ENCODE measurements at regions of chr12 and their contacts with region 1.

Region 1: DNA sequence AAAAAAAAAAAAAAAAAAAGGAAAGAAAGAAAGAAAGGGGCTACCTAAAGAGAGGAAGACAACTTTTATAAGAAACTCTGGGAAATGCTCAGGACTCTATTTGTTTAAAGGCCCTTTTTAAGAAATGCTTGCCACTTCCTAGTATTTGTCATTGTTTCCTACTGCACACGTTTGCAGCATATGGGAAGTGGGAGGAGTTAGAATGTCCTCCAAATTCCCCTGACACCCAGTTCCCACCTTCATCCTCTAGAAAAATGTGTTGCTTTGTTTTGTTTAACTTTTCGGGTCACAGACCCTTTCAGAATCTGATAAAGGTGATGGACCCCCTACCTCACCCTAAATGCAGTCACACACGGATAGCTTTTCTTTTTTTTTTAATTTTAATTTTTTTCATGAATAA is 40.8 kb downstream of the NINJ2 start:
- DNase-seq: peak; percentile 28
- H3K4me3 Mint-ChIP-seq: peak overlapping the region; percentile 68
- H3K27ac Mint-ChIP-seq: peak overlapping the region; percentile 96
- H3K4me1 Mint-ChIP-seq: peaks cover 62% of the 10 kb centered on the region
- H3K27me3 Mint-ChIP-seq: no peaks in the 10 kb centered on the region

Region 2: GRCh38 chr12:575948-576612 is 46.3 kb before region 1 on chr12:
- intact Hi-C with region 1: loop called (anchors 1 kb)
- DNase-seq: peak; percentile 81
- H3K4me3 Mint-ChIP-seq: no peak overlapping the region
- H3K27ac Mint-ChIP-seq: peak overlapping the region; percentile 80
- H3K4me1 Mint-ChIP-seq: peaks cover 33% of the 10 kb centered on the region
- H3K27me3 Mint-ChIP-seq: peaks cover 4% of the 10 kb centered on the region